CD4-positive, alpha-beta T cell (primary cell): ENCODE measurements at regions of chr6 and their contacts with region 1.

Region 1: GRCh38 chr6:119313937-119314884 is 35.4 kb downstream of the MAN1A1 start:
- DNase-seq: peak in 5 of 14 experiments; percentile 6 to 71 (median 59)
- ATAC-seq: peak; percentile 68
- H3K4me3 ChIP-seq: no peak overlapping the region
- H3K4me3 Mint-ChIP-seq: peak overlapping the region; percentile 49
- H3K27ac ChIP-seq: peak overlapping the region; percentile 0 to 71
- H3K27ac Mint-ChIP-seq: peak overlapping the region; percentile 82
- H3K4me1 ChIP-seq: peaks cover 34% of the 10 kb centered on the region
- H3K4me1 Mint-ChIP-seq: peaks cover 42% of the 10 kb centered on the region
- H3K27me3 ChIP-seq: no peaks in the 10 kb centered on the region
- H3K27me3 Mint-ChIP-seq: no peaks in the 10 kb centered on the region
- CTCF ChIP-seq: no peak

Region 2: DNA sequence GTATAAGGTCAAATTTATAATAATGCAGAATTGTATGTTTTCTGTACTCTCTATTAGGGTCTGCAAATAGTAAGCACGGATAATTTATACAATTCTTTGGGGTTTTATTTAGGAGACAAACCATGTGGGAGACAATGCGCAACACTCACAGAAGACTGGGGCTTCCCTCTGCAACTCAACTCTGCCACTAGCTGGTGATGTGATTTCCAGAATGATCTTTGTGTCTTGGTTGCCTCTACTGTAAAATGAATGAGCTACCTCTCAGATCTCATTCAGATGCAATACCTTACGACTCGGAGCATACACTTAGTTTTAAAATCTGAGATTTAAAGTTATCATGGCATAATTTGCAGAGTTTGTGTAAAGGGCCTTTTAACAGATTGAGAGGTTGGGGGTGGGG is 29.0 kb after region 1 on chr6:
- CTCF ChIA-PET with region 1: no interaction called
- POLR2A ChIA-PET with region 1: interaction called, 26 read pairs
- intact Hi-C with region 1: no loop called
- DNase-seq: peak in 3 of 14 experiments; percentile 21 to 45 (median 36)
- ATAC-seq: peak; percentile 22
- H3K4me3 ChIP-seq: no peak overlapping the region
- H3K4me3 Mint-ChIP-seq: no peak overlapping the region
- H3K27ac ChIP-seq: no peak overlapping the region
- H3K27ac Mint-ChIP-seq: peak overlapping the region; percentile 6
- H3K4me1 ChIP-seq: peaks cover 30% of the 10 kb centered on the region
- H3K4me1 Mint-ChIP-seq: peaks cover 64% of the 10 kb centered on the region
- H3K27me3 ChIP-seq: no peaks in the 10 kb centered on the region
- H3K27me3 Mint-ChIP-seq: no peaks in the 10 kb centered on the region
- CTCF ChIP-seq: no peak